Prostate gland (tissue), 2 donors: ENCODE measurements at regions of chr5 and their contacts with region 1.

Region 1: DNA sequence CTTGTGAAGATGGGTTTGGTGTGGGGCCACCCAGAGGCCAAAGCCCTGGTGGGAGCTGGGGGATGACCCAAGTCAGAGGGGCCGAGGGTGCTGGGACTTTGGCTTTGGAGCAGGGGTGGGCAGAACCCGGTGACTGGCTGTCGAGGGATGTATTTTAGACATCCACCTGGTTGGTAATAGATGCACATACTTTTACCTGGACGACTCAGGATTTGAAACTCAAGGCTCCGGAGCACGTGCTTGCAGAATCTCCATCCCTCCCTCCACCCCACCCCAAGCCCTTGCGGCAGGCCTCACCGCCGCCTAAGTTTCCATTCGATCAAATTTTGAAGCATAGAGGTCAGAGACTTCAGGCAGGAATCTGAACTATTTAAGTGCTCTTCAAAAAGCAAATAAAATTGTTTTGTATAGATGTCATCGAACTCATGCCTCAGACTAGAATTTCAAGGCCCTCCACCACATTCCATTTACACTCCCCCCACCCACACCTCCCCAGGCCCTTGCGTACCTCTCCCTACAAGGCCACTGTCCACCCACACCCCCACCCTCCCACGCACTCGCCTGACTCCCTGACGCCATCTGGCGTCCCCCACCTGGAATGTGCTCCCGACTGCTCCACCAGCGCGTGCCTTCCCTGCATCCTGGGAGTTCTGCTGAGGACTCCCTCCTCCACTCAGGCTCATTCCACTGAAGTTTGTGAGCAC is 56.6 kb upstream of the RPL26L1 start:
- DNase-seq: peak; percentile 49
- H3K4me3 ChIP-seq: no peak overlapping the region
- H3K27ac ChIP-seq: peak overlapping the region; percentile 95 to 96
- H3K4me1 ChIP-seq: peaks cover 39% of the 10 kb centered on the region
- H3K27me3 ChIP-seq: no peaks in the 10 kb centered on the region
- CTCF ChIP-seq: peak in 3 of 4 experiments; percentile 24 to 61 (median 44)
- POLR2A ChIP-seq: no peak

Region 2: DNA sequence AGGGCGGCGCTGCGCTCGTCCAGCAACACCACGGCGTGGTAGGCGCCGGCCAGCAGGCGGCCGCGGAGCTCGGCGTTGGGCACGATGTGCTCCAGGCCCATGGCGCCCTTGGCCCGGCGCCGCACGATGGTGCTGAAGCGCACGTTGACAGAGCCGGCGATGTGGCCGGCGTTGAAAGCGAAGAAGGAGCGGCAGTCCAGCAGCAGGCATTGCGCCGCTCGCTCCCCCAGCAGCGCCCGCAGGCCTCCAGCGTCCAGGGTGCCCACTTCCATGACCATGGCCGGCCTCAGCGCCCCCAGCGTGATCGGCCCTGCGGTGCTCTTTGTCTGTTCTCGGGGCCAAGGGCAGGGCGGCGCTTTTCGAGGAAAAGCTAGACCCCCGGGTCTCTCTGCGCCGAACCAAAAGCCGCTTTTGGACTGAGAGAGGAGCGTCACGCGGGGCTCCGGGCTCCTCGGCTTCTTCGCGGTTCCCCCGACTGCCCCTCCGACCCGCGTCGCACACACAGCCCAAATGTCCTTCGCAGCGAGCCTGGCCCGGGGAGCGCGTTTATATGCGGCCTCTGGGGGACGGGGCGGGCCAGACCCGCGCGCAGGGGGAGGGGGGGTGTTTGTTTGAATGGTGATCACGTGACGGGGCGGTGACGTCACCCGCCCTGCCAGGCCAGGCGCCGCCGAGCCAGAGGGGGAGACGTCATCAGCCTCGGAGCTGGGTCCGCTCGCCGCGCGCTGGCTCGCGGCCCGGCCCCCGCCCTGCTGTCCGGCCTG is 131.8 kb before region 1 on chr5 and contains the start of gene DUSP1:
- intact Hi-C with region 1: loop called (anchors 1 kb)
- DNase-seq: peak; percentile 99
- H3K4me3 ChIP-seq: peak within 1 kb of the TSS; percentile 76 to 92
- H3K27ac ChIP-seq: peak within 1 kb of the TSS; percentile 98 to 100
- H3K4me1 ChIP-seq: peaks cover 17% of the 10 kb centered on the region
- H3K27me3 ChIP-seq: no peaks in the 10 kb centered on the region
- CTCF ChIP-seq: peak in 2 of 4 experiments; percentile 63 to 64
- POLR2A ChIP-seq: peak; percentile 99
- total RNA-seq, gene DUSP1: 559 to 659 TPM

Region 3: GRCh38 chr5:172868924-172869591 is 33.6 kb before region 1 on chr5:
- intact Hi-C with region 1: loop called (anchors 2 kb)
- DNase-seq: peak; percentile 88
- H3K4me3 ChIP-seq: no peak overlapping the region
- H3K27ac ChIP-seq: peak overlapping the region; percentile 79 to 80
- H3K4me1 ChIP-seq: peaks cover 38% of the 10 kb centered on the region
- H3K27me3 ChIP-seq: no peaks in the 10 kb centered on the region
- CTCF ChIP-seq: peak in 2 of 4 experiments; percentile 44
- POLR2A ChIP-seq: no peak